A673 (cell line): ENCODE measurements at regions of chr9 and their contacts with region 1.

Region 1: DNA sequence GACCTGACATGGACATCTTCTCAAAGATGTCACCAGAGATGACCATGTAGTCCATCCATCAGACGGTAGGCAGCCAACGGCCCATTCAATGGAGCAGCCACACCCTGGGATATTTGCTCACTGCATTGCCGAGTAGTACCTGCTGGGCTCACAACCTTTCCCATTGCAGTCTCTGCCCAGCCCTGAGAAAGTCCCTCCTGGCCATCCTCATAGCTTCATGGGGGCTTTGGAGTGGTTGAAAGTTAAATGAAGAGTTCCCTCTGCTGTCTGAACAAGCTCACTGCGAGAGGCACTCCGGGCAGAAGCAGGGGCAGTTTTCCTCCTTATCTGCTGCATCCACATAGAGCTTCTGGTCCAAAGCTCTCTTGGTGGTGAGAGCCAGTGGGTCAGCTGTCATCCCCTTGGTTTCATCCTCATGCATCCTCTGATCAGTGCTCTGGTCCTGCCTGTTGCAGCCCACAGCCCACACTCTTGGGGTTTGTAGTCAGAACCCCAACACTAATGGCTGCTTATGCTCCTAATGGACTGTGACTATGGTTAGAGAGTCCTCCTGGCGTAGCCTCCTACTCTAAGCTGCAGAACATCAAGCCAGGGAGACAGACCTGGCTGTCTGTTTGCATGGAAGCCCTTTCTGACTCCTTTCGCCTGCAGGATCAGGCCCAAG is 23.4 kb downstream of the TNFSF8 start:
- DNase-seq: peak; percentile 63
- H3K4me3 ChIP-seq: no peak overlapping the region
- H3K27ac ChIP-seq: no peak overlapping the region
- H3K4me1 ChIP-seq: peaks cover 11% of the 10 kb centered on the region
- H3K27me3 ChIP-seq: no peaks in the 10 kb centered on the region
- CTCF ChIP-seq: peak; percentile 79

Region 2: DNA sequence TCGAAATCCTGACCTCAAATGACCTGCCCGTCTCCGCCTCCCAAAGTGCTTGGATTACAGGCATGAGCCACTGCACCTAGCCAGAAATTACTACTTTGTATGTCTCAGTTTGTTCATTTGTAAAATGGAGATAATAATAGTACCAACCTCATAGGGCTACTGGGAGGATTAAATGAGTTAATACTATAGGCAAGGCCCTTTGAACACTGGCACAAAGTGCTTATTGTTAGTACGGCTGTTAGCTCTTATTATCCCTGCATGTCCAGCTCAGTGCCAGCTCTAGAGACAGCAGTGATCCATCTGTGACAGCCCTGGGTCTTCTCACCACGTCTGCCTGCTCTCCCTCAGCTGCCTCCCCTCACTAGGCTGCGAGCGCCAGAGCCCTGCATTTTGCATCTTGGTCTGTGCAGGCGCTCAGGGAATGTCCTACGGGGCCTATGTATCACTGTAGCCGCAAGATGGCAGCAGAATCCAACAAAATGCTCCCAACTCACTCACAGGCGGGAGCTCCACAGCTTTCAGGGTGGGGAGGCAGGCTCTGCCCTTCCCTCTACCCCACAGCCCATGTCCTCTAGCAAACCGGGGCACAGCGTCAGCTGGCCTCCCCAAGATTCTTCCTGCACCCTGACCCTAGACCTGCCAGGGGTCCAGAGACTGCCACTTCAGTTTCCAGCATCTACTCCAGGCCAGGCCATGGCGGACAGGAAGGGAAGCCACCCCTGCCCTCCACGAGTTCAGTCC is 501.6 kb before region 1 on chr9:
- CTCF ChIA-PET with region 1: interaction called, 13 read pairs
- POLR2A ChIA-PET with region 1: no interaction called
- intact Hi-C with region 1: loop called (anchors 2 kb)
- DNase-seq: peak; percentile 88
- H3K4me3 ChIP-seq: no peak overlapping the region
- H3K27ac ChIP-seq: no peak overlapping the region
- H3K4me1 ChIP-seq: no peaks in the 10 kb centered on the region
- H3K27me3 ChIP-seq: no peaks in the 10 kb centered on the region
- CTCF ChIP-seq: peak; percentile 84

Region 3: GRCh38 chr9:114662081-114662989 is 244.7 kb before region 1 on chr9:
- CTCF ChIA-PET with region 1: interaction called, 5 read pairs
- POLR2A ChIA-PET with region 1: no interaction called
- intact Hi-C with region 1: loop called (anchors 5 kb)
- DNase-seq: peak; percentile 71
- H3K4me3 ChIP-seq: no peak overlapping the region
- H3K27ac ChIP-seq: no peak overlapping the region
- H3K4me1 ChIP-seq: no peaks in the 10 kb centered on the region
- H3K27me3 ChIP-seq: no peaks in the 10 kb centered on the region
- CTCF ChIP-seq: peak; percentile 87

Region 4: DNA sequence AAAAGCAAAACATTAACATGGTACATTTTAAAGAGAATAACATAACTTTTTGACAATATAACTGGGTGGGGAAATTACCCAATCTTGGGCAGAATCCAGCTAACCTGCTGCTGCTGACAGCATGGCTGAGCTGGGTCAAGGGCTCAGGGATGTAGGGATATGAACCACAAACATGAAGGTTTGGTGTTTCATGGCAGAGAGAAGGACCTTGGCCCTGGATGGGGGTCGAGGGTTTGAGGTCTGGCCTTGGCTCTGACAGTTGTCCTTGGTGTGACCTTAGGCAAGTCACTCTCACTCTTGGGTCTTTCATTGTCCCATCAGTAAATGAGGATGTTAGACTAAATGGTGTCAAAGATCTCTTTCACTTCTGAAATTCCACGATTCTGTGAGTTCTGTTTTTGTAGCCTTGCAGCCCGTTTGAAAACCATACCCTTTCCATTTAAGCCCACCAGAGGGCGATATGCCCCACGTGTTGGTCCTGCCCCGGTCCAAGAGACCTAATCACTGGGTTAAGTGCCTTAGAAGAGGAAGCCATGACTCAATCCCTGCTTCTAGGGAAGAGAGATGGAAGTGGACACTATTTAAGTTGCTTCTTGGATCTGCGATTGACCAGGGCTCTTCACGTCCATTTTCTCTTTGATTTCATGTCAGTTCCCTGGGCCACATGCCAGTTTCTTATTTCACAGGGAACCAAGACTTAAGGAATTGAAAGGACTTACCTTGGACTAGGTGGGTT is 168.3 kb before region 1 on chr9:
- CTCF ChIA-PET with region 1: interaction called, 7 read pairs
- POLR2A ChIA-PET with region 1: interaction called, 3 read pairs
- intact Hi-C with region 1: loop called (anchors 1 kb)
- DNase-seq: peak; percentile 82
- H3K4me3 ChIP-seq: no peak overlapping the region
- H3K27ac ChIP-seq: no peak overlapping the region
- H3K4me1 ChIP-seq: peaks cover 13% of the 10 kb centered on the region
- H3K27me3 ChIP-seq: no peaks in the 10 kb centered on the region
- CTCF ChIP-seq: peak; percentile 86

Region 5: DNA sequence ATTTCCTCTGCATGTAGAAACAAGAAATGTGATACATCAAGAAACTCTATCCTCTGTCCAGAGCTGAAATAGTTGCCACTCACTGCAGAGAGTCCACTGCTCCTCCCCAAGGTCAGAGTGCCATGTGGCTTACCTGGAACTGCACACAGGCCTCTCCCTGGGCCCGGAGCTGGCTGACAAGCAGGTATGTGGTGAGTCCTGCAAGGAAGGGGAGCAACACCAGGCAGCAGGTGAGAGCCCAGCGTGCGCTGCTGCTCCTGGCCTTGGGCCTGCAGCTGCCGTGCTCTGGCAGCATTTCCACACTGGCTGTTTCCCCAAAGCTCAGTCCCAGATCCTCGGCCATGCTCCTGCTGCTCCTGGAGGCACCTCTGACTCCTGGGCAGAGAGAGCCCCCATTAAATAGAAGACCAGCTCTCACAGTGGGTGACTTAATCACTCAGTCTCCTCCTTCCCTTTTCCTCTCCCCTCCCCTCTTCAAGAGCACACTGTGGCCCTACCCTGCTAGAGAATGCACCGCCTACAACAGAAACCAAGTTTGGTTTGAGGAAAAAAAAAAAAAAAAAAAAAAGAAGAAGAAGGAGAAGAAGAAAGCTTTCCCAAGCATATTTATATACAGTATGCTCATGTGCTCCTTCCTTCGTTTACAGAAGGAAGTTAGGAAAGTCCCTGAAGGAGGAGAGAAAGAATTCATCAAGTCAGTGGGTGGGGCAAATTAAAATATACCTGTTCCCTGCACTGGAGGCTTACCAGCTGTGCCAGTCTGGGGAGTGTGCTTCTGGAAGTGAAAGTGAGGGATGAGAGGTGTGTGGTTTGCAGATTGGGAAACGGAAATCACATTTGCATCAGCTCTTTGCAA is 101.1 kb before region 1 on chr9 and contains the start of gene TNFSF15:
- CTCF ChIA-PET with region 1: no interaction called
- POLR2A ChIA-PET with region 1: no interaction called
- intact Hi-C with region 1: no loop called
- DNase-seq: no peak
- H3K4me3 ChIP-seq: no peak within 1 kb of the TSS
- H3K27ac ChIP-seq: no peak within 1 kb of the TSS
- H3K4me1 ChIP-seq: no peaks in the 10 kb centered on the region
- H3K27me3 ChIP-seq: no peaks in the 10 kb centered on the region
- CTCF ChIP-seq: no peak
- total RNA-seq, gene TNFSF15: 0.04 TPM in 1 of 2 replicates, not detected in the other

Region 6: DNA sequence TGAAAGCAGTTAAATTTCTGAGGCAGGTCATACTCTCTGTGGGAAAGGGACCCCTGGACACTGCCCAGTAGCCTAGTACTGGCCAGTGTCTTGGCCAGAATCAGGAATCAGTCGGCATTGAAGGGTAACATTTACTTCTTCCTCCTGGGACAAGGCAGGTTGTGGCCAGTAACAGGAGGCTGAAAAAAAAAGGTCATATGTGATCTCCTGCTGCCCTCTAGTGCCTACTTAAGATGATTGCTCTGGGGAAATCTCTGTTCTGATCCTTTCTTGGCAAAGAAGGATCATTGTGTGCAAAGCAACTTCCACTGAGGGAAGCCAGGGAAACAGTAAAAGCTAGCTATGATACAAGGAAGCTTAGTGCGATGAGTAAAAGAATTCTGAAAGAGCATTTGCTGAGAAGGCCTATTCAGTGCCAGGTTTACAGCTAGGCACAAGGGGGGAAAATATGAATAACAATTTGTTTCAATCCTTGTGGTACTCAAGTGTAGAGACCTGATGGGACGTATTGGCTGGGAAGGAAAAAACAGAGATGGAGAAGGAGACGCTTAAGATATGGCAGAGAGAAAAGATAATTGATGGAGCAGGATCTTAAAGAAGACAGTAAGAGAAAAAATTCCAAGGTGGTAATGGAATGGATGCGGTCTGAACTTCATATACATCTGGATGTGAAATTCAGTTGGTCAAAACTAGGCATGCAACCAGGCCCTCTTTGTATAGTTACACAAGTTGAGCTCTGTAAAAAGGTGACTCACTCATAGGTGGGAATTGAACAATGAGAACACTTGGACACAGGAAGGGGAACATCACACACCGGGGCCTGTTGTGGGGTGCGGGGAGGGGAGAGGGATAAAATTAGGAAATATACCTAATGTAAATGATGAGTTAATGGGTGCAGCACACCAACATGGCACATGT is 1754.3 kb after region 1 on chr9:
- CTCF ChIA-PET with region 1: no interaction called
- POLR2A ChIA-PET with region 1: no interaction called
- intact Hi-C with region 1: loop called (anchors 5 kb)
- DNase-seq: peak; percentile 81
- H3K4me3 ChIP-seq: no peak overlapping the region
- H3K27ac ChIP-seq: no peak overlapping the region
- H3K4me1 ChIP-seq: peaks cover 22% of the 10 kb centered on the region
- H3K27me3 ChIP-seq: no peaks in the 10 kb centered on the region
- CTCF ChIP-seq: peak; percentile 86